ENCODE measurements at regions of chrX and their contacts with region 1.

Region 1: GRCh38 chrX:111244235-111244750 is 26.0 kb downstream of the CAPN6 start:
- DNase-seq: no peak
- ATAC-seq: no peak
- H3K4me3 Mint-ChIP-seq: no peak overlapping the region
- H3K27ac Mint-ChIP-seq: no peak overlapping the region
- H3K4me1 Mint-ChIP-seq: no peaks in the 10 kb centered on the region
- H3K27me3 Mint-ChIP-seq: no peaks in the 10 kb centered on the region

Region 2: DNA sequence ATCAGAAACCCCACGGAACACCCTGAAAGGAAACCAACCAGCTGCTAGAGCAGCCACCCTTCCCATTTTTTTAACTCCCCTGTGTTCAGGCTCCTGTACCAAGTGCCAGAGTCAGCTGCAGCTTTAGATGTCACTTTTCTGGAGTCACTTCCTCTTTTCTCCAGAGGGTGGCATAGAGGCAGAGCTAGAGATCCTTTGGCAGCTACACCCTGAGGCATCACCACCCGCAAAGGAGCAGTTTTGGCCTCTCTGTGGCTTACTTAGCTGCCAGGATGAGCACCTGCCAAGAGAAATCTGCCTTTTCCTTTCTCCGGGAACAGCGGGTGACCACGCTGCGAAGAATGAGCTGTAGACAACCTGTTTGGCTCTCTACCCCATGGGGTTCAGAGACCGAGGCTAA is 390.7 kb before region 1 on chrX:
- CTCF ChIA-PET with region 1: interaction called, 8 read pairs
- POLR2A ChIA-PET with region 1: no interaction called
- intact Hi-C with region 1: loop called in 1 of 2 experiments (anchors 2 kb)
- DNase-seq: no peak
- ATAC-seq: no peak
- H3K4me3 Mint-ChIP-seq: no peak overlapping the region
- H3K27ac Mint-ChIP-seq: no peak overlapping the region
- H3K4me1 Mint-ChIP-seq: no peaks in the 10 kb centered on the region
- H3K27me3 Mint-ChIP-seq: peaks cover 3% of the 10 kb centered on the region

Region 3: DNA sequence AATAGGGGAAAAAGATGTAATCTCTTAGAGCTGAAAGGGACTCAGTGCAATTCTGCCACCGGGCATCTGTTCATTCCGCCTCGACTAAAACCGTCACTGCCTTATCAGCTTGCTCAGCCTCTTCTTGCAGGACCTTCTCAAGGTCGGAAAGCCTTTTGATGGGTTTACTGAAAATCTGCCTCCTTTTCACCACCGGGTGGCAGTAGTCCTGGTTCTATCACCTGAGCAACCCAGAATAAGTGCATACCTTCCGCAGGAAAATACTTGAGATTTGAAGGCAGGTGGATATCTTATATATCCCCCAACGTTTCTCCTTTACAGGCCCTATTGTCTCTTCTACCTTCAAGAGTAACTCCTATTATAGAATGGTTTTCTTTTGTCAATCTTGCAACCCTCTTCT is 251.7 kb before region 1 on chrX:
- CTCF ChIA-PET with region 1: interaction called, 6 read pairs
- POLR2A ChIA-PET with region 1: no interaction called
- intact Hi-C with region 1: loop called (anchors 2 kb)
- DNase-seq: peak; percentile 35
- ATAC-seq: no peak
- H3K4me3 Mint-ChIP-seq: no peak overlapping the region
- H3K27ac Mint-ChIP-seq: no peak overlapping the region
- H3K4me1 Mint-ChIP-seq: no peaks in the 10 kb centered on the region
- H3K27me3 Mint-ChIP-seq: peaks cover 2% of the 10 kb centered on the region

Region 4: GRCh38 chrX:111168314-111168713 is 76.0 kb before region 1 on chrX:
- CTCF ChIA-PET with region 1: interaction called, 3 read pairs
- POLR2A ChIA-PET with region 1: no interaction called
- intact Hi-C with region 1: loop called (anchors 5 to 10 kb)
- DNase-seq: peak; percentile 4
- ATAC-seq: peak; percentile 36
- H3K4me3 Mint-ChIP-seq: no peak overlapping the region
- H3K27ac Mint-ChIP-seq: no peak overlapping the region
- H3K4me1 Mint-ChIP-seq: peaks cover 10% of the 10 kb centered on the region
- H3K27me3 Mint-ChIP-seq: no peaks in the 10 kb centered on the region